GM13976 (cell line): ENCODE measurements at regions of chr15 and their contacts with region 1.

Region 1: GRCh38 chr15:64717735-64718495 is 57.5 kb downstream of the RBPMS2 start:
- DNase-seq: no peak
- CTCF ChIP-seq: no peak

Region 2: DNA sequence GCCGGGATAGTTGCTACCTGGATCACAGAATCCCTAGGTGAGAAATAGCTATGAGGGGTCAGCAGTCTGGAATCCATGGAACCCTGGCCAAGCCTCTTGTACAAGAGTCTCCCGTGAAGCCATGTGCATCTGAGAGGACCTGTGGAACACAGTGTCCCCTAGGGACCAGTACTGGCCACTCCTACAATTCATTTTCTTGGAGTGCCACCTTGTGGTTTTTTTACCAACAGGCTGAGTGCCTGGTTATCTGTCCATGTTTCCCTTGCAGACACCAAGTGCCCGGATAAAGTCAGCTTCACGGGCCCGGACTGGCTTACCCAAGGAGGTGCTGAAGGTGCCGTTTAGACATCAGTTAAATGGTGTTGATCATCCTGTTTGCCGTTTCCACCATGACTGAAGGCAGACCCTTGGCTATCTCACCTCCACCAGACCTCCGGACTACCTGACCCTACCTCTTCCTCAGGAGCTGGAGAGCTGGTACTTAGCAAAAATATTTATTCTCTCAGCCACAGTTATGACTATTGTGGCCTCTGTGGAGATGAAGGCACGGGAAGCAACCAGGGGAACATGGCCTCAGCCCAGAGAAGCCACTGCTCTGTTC is 36.4 kb before region 1 on chr15:
- in situ Hi-C with region 1: loop called (anchors 5 kb)
- DNase-seq: peak; percentile 72
- CTCF ChIP-seq: peak; percentile 49